ENCODE measurements at regions of chr2 and their contacts with region 1.

Region 1: GRCh38 chr2:158006961-158007719 is 94.5 kb upstream of the UPP2 start:
- DNase-seq: no peak
- ATAC-seq: no peak
- H3K4me3 ChIP-seq: no peak overlapping the region
- H3K27ac ChIP-seq: no peak overlapping the region
- H3K4me1 ChIP-seq: peaks cover 8% of the 10 kb centered on the region
- H3K27me3 ChIP-seq: no peaks in the 10 kb centered on the region
- CTCF ChIP-seq: no peak

Region 2: GRCh38 chr2:157492189-157492773 is 514.9 kb before region 1 on chr2:
- intact Hi-C with region 1: loop called (anchors 5 kb)
- DNase-seq: peak; percentile 44 to 69
- ATAC-seq: peak; percentile 71 to 91 (median 84)
- H3K4me3 ChIP-seq: no peak overlapping the region
- H3K27ac ChIP-seq: no peak overlapping the region
- H3K4me1 ChIP-seq: no peaks in the 10 kb centered on the region
- H3K27me3 ChIP-seq: no peaks in the 10 kb centered on the region
- CTCF ChIP-seq: peak; percentile 64

Region 3: GRCh38 chr2:157497638-157498314 is 509.4 kb before region 1 on chr2:
- intact Hi-C with region 1: loop called (anchors 5 kb)
- DNase-seq: no peak
- ATAC-seq: peak; percentile 48 to 84 (median 71)
- H3K4me3 ChIP-seq: no peak overlapping the region
- H3K27ac ChIP-seq: no peak overlapping the region
- H3K4me1 ChIP-seq: no peaks in the 10 kb centered on the region
- H3K27me3 ChIP-seq: no peaks in the 10 kb centered on the region
- CTCF ChIP-seq: peak; percentile 62

Region 4: DNA sequence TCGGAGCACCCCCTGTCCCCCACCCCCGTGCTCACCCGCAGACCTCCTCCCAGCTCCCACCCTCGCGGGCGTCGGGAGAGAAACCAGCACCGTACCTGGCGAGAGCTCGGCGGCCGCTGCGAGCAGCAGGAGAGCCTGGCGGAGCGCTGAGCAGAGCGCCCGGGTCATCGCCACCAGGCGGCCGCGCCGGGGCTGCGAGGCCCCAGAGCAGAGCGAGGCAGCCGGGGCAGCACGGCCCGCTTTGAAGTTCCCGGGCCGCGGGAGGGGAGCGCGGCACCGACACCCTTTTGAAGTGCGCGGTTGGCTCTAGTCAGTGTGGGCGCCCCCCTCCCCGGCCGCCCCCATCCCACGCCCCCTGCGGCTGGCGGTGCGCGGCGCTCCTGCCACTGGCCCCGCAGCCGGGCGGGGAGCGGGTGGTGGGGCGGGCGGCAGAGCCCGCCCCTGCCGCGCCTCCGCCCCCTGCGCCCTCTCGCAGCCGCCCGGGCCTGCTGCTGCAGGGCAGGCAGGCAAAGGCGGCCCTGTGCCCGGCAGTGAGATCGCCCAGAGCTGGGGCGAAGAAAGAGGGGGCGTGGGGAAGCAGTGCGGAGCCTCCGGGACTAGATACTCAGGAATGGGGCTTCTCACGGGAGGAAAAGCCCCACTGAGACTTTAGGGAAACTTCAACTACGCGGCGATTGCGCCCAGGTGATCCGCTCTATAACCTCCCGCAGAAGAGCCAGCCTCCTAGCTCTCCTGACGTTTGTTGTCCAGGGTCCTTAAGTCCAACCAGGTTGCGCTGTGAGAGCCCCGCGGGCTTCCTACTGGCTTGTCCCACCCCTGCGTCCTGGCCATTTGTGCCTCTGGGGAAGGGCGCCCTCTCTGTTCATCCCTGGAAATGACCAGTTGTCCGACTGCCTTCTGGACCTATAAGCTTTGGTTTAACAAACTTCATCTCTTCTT is 378.4 kb before region 1 on chr2 and contains the start of gene ACVR1C:
- intact Hi-C with region 1: loop called in 1 of 2 experiments (anchors 10 kb)
- DNase-seq: peak; percentile 58 to 76
- ATAC-seq: peak; percentile 83 to 91 (median 88)
- H3K4me3 ChIP-seq: peak within 1 kb of the TSS; percentile 77
- H3K27ac ChIP-seq: peak within 1 kb of the TSS; percentile 61
- H3K4me1 ChIP-seq: no peaks in the 10 kb centered on the region
- H3K27me3 ChIP-seq: peaks cover 0 to 6% (median 0%) of the 10 kb centered on the region in 3 donors
- CTCF ChIP-seq: peak; percentile 49
- total RNA-seq, gene ACVR1C: 1.1 to 1.9 (median 1.5) TPM

Region 5: DNA sequence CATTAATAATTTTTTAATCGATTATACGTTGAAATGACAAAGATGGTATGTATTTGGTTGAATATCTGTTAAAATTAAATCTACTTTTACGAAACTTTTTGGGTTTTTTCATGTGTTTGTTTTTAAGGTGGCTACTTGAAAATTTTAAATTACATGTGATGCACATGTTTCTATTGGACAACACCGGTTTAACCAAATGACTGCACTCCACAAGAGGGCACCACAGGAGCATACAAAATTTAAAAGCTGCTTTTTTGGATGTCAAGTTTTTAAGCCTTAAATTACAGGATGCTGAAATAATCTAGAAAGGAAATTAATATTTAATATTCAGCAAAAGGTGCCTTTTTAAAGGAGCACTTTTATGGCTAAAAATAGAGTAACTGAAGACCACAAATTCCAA is 229.7 kb before region 1 on chr2:
- intact Hi-C with region 1: loop called (anchors 2 kb)
- DNase-seq: peak in 1 of 2 donors; percentile 19
- ATAC-seq: peak in 2 of 4 donors; percentile 39 to 49
- H3K4me3 ChIP-seq: no peak overlapping the region
- H3K27ac ChIP-seq: no peak overlapping the region
- H3K4me1 ChIP-seq: peaks cover 27% of the 10 kb centered on the region
- H3K27me3 ChIP-seq: no peaks in the 10 kb centered on the region
- CTCF ChIP-seq: peak; percentile 75

Region 6: DNA sequence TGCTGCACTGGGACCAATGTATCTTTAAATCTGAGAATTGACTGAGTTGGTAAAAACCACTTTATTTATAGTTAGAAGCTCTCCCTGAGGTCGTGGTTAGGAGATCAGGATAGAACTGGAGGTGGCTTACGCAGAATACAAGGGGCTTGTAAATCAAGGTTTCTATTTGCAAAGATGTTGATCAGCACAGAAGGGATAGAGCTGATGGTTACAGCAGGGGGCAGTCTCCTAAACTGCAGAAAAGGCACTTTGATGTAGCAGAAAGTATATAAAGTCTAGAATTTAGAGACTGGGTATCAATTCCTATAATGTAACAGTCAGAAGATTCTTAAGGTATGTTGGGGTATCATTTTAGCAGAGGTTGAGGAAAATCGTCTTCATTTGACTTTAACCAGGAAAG is 105.8 kb before region 1 on chr2:
- intact Hi-C with region 1: loop called in 1 of 2 experiments (anchors 10 kb)
- DNase-seq: no peak
- ATAC-seq: no peak
- H3K4me3 ChIP-seq: no peak overlapping the region
- H3K27ac ChIP-seq: no peak overlapping the region
- H3K4me1 ChIP-seq: no peaks in the 10 kb centered on the region
- H3K27me3 ChIP-seq: no peaks in the 10 kb centered on the region
- CTCF ChIP-seq: no peak